ENCODE measurements at regions of chr6 and their contacts with region 1.

Region 1: DNA sequence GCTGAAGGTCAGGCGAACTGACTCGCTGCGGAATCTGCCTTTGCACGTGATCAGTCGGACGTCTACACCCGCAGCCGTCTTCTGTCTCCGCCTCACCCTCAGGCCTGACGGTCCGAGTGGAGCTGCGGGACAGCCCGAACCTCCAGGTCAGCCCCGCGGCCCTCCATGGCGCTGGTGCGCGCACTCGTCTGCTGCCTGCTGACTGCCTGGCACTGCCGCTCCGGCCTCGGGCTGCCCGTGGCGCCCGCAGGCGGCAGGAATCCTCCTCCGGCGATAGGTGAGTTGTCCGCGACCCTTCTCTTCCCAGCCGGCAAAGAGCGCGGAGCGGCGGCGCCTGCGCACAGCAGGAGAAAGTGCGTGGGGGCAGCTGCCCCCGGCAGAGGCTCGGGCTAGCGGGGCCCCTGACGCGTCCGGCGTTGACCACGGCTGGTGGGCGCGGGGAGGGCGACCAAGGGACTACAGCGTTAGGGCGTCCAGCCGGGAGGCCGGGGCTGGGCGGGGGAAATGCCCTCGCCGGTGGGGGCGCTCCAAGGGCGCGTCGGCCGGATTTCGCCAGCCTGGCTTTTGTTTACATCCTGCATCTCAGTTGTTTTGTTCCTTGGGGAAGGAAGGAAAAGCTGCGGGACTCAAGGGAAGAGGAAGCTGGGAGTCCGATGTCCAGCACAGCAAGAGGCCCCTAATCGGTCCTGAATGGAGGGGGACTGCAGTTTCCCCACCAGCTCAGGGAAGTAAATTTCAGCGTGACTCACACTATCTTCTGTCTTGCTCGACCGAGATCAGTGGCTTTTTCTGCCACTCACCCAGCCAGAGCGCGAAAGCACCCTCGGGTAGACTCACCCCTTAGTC is at the start of gene SMPDL3A:
- H3K4me3 ChIP-seq: peak within 1 kb of the TSS; percentile 66
- H3K27ac ChIP-seq: peak within 1 kb of the TSS; percentile 78
- H3K4me1 ChIP-seq: peaks cover 12% of the 10 kb centered on the region
- CTCF ChIP-seq: peak; percentile 94

Region 2: DNA sequence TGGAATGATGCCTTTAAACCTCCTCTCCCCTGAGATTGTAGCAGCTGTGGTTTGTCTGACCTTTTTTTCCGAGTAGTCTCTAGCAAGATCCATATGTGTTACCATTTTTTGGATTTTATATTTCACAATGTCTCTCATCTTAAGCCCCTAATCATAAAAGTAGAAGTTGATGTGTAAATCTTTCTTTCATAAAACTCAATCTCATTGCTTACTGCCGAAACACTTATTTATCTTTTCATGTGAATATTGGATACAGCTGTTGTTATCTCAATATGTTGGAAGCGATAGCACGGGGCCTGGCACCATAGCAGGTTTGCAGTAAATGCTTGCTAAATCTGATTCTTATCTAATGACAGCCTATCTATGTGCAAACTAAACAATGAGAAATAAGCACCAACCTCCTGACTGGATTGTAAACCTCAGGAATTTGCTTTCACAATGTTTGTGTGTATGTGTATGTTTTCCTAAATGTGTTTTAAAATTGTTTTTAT is 13.8 kb after region 1 on chr6:
- CTCF ChIA-PET with region 1: interaction called, 12 read pairs
- POLR2A ChIA-PET with region 1: interaction called, 5 read pairs
- H3K4me3 ChIP-seq: no peak overlapping the region
- H3K27ac ChIP-seq: no peak overlapping the region
- H3K4me1 ChIP-seq: peaks cover 3% of the 10 kb centered on the region; the same call in 1 of the 2 replicates
- CTCF ChIP-seq: no peak

Measured in HEK293 (cell line).